PC-9 (cell line): ENCODE measurements at regions of chr1 and their contacts with region 1.

Region 1: DNA sequence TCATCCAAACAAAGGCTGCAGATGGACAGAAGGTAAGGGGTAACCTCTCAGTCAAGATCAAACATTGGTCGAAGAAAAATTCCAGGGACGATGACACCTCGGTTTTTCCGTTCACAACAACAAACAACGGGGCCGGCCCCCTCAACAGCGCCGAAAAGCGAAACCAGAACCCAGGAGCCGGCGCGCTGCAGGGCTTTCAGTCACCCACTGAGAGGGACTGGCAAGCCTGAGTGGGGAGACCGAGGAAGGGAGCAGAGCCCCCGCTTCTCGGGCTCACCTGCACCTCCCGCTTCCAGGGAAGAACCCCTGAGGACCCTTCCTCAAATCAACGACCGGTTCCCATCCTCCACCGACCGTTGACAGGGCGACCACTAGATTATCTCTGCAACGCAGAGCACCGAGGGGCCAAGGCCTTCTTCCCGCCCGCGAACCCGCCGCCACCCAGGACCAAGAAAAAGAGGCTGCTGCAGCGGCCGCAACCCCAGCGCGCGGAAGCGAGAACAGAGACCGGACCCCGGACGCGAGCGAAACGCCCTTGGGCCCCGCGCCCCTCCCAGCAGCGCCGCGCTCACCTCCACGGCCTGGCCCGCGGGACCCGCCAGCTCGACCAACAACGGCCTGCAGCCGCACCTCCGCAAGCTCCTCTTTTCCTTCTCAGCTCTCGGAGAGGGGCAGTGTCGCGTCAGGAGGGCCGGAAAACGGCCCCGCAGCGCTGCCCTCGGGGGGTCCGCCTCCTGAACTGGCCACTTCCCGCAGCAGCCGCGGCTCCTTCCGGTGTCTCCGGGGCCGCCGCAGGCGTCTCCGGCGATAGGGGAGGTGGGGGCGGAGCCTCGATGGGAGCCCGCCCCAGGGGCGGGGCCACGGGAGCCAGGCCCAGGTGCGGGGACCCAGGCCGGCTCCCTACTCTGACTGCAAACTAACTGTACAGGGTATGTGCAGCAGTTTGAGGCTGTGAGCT is at the start of gene USP33:
- DNase-seq: peak; percentile 75 to 93
- H3K4me3 ChIP-seq: peak within 1 kb of the TSS; percentile 90
- H3K27ac ChIP-seq: peak within 1 kb of the TSS; percentile 69
- H3K4me1 ChIP-seq: peaks cover 34% of the 10 kb centered on the region
- H3K27me3 ChIP-seq: no peaks in the 10 kb centered on the region
- CTCF ChIP-seq: no peak
- total RNA-seq, gene USP33: 54.9 and 59.1 TPM in 2 replicates

Region 2: GRCh38 chr1:77473690-77474089 is 285.7 kb before region 1 on chr1:
- CTCF ChIA-PET with region 1: no interaction called
- POLR2A ChIA-PET with region 1: no interaction called
- intact Hi-C with region 1: no loop called
- DNase-seq: peak in 1 of 2 experiments; percentile 59
- H3K4me3 ChIP-seq: no peak overlapping the region
- H3K27ac ChIP-seq: no peak overlapping the region
- H3K4me1 ChIP-seq: peaks cover 9% of the 10 kb centered on the region; the same call in 1 of the 2 replicates
- H3K27me3 ChIP-seq: no peaks in the 10 kb centered on the region
- CTCF ChIP-seq: no peak

Region 3: GRCh38 chr1:77742011-77742555 is 17.3 kb before region 1 on chr1:
- CTCF ChIA-PET with region 1: no interaction called
- POLR2A ChIA-PET with region 1: no interaction called
- intact Hi-C with region 1: no loop called
- DNase-seq: no peak
- H3K4me3 ChIP-seq: no peak overlapping the region
- H3K27ac ChIP-seq: no peak overlapping the region
- H3K4me1 ChIP-seq: no peaks in the 10 kb centered on the region
- H3K27me3 ChIP-seq: no peaks in the 10 kb centered on the region
- CTCF ChIP-seq: no peak

Region 4: DNA sequence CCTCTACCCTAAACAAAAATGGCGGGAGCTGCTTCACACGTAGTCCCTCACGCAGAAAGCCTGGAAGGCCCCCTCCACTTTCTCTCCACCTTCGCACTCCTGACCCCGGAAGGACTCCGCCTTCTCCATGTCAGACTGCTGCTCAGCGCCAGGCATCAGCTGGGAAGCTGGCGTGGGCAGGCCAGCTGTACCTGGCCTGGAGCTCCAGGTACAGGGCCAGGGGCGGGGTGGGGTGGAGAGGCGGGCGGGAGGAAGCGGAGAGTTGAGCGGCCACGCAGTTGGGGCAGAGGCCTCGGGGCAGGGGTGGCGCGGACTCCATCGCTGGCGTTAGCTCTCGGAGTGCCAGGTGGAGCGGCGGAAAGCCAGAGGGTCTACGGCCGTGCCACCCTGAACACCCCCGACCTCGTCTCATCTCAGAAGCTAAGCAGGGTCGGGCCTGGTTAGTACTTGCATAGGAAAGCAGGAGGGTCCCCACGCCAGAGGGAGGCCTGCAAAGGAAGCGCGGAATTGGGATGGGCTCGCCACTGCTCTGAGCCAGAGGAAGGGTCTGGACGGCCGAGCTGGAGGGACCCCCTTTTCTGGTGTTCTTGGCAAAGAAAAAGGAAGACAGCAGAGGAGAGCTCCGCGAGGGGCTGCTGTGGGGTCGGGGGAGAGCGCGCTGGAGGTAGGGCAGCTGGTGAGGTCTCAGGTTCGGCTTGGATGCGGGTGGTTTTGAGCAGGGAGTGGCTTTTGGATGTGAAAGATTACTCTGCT is 20.4 kb after region 1 on chr1 and contains the start of gene MIGA1:
- CTCF ChIA-PET with region 1: no interaction called
- POLR2A ChIA-PET with region 1: interaction called, 4 read pairs
- intact Hi-C with region 1: loop called (anchors 1 kb)
- DNase-seq: peak; percentile 85 to 92
- H3K4me3 ChIP-seq: peak within 1 kb of the TSS; percentile 88
- H3K27ac ChIP-seq: peak within 1 kb of the TSS; percentile 27
- H3K4me1 ChIP-seq: peaks cover 19% of the 10 kb centered on the region
- H3K27me3 ChIP-seq: no peaks in the 10 kb centered on the region
- CTCF ChIP-seq: no peak
- total RNA-seq, gene MIGA1: 11.5 TPM in 2 replicates